ENCODE measurements at regions of chr2 and their contacts with region 1.

Region 1: DNA sequence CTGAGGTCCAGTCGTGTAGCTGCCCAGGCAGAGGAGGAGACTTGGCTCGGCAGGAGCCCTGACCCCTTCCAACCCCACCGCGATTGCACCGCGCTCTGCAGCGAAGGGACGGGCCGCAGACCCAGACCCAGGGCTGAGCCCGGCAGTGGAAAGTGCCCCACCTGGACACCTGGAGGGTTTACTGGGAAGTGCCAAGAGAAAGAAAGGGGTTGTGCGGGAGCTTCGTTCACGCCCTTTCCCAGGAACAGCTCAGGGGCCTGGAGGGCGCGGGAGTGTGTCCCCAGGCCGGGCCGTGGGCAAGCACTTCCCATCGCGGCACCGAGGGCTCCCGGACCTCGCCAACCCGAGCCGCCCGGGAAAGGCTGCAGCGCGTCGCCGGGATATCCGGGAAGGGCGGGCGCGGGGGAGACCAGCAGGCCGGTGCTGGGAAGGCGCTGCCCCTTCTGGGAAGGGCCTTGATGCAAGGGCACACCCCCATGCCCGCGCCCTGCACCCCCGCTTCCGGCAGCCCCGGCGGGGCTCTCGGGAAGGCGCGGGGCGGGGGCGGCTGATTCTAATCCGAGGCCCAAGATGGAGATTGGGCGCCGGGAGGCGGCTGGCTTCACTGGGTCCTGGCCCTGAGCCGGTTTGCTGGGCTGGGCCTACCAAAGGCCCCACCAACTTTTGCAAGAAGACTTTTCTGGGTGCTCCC is 36.1 kb upstream of the MRPL33 start:
- DNase-seq: peak; percentile 78
- H3K4me3 ChIP-seq: peak overlapping the region; percentile 18 to 44 (median 40)
- H3K27ac ChIP-seq: peak overlapping the region; percentile 70 to 81 (median 74)
- H3K4me1 ChIP-seq: peaks cover 0 to 20% (median 8%) of the 10 kb centered on the region in 4 donors
- H3K27me3 ChIP-seq: no peaks in the 10 kb centered on the region
- CTCF ChIP-seq: peak in 1 of 5 experiments; percentile 47
- EP300 ChIP-seq: peak; percentile 98
- POLR2A ChIP-seq: peak; percentile 68

Region 2: DNA sequence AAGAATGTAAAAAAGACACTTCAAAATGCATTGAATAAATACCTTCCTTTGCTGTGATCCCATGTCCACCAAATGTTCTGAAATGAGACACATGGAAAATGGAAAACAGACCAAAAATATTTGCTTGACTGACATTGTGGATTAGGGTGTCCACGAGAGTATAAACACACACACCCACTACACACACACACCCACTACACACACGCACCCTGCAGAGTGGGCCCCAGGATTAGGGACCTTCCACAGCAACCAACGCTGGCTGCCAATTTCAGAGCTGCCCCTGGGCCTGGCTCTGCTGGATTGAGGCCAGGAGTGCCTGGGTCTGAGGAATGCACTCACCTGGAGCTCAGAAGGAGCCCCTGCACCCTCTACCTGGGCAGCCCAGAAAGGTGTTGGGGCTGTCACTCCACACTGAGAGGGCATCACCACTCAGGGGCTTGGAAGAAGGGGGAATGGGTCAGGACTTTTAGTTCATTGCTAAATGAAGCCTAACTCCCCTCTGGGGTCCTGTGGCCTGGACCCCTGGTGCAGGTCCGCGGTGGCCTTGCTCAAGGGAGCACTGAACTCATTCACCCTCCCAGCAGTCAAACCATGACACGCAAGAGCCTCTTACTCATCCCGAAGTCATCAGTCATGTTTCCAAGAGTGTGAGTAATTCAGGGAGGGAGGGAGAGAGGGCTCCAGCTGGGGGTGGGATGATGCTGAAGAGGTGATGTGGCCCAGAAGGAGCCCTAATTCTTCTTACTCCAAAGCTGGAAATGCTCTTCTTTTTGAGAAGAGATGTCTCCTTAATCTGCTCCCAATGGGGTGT is 710.2 kb after region 1 on chr2:
- in situ Hi-C with region 1: loop called in 2 of 4 experiments (anchors 25 kb)
- intact Hi-C with region 1: no loop called
- DNase-seq: no peak
- H3K4me3 ChIP-seq: no peak overlapping the region
- H3K27ac ChIP-seq: no peak overlapping the region
- H3K4me1 ChIP-seq: no peaks in the 10 kb centered on the region
- H3K27me3 ChIP-seq: no peaks in the 10 kb centered on the region
- CTCF ChIP-seq: no peak
- EP300 ChIP-seq: no peak
- POLR2A ChIP-seq: no peak

Measured in transverse colon (tissue), 4 donors.